ENCODE measurements at regions of chr3 and their contacts with region 1.

Region 1: GRCh38 chr3:72847751-72848702 is at the start of gene SHQ1:
- DNase-seq: peak; percentile 98
- ATAC-seq: peak; percentile 99
- total RNA-seq, gene SHQ1: 16.2 to 21.8 TPM

Region 2: DNA sequence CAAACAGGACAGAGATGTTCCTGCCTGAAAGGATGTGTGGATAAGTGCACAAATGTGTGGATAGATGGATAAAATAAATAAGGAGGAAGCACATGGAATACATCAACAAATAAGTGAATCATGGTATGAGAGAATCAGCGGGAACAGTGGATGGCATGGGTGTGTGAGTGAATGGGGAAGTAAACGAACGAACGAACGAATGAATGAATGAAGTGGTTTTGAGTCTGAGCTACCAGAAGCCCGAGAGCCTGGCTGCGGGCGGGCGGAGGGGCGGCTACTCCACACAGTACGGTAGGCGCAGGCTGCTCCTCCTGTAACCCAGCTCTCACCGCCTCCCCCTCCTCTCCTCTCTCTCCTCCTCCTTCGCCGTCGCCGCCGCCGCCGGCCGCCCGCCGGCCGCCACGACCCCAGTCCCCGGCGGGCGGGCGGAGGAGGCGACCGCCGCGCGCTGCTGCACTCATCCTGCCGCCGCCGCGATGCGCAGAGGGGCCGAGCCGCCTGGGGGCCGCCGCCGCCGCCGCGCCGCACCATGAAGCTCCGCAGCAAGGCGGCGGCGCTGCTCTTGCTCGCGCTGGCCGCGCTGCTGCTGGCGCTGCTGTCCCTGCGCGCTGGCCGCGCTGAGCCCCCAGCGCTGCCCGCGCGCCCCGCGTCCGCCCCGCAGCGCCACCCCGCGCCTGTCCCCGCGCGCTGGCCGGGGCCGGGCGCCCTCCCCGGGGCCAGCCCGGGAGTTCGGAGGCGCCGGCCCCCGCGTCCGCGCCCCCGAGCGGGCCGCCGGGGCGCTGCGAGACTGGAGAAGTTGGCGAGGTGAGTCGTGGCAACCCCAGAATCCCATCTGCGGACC is 39.9 kb after region 1 on chr3 and contains the start of gene GXYLT2:
- intact Hi-C with region 1: loop called in 1 of 2 experiments (anchors 5 kb)
- DNase-seq: peak; percentile 71
- ATAC-seq: peak; percentile 84
- total RNA-seq, gene GXYLT2: 26.3 to 27.4 TPM

Region 3: GRCh38 chr3:72919520-72919919 is 71.5 kb after region 1 on chr3:
- intact Hi-C with region 1: loop called in 1 of 2 experiments (anchors 5 kb)
- DNase-seq: no peak
- ATAC-seq: no peak

Region 4: GRCh38 chr3:73080216-73080966 is 232.4 kb after region 1 on chr3:
- intact Hi-C with region 1: loop called (anchors 5 to 10 kb)
- DNase-seq: no peak
- ATAC-seq: peak in 1 of 2 donors; percentile 49